ENCODE measurements at regions of chr15 and their contacts with region 1.

Region 1: DNA sequence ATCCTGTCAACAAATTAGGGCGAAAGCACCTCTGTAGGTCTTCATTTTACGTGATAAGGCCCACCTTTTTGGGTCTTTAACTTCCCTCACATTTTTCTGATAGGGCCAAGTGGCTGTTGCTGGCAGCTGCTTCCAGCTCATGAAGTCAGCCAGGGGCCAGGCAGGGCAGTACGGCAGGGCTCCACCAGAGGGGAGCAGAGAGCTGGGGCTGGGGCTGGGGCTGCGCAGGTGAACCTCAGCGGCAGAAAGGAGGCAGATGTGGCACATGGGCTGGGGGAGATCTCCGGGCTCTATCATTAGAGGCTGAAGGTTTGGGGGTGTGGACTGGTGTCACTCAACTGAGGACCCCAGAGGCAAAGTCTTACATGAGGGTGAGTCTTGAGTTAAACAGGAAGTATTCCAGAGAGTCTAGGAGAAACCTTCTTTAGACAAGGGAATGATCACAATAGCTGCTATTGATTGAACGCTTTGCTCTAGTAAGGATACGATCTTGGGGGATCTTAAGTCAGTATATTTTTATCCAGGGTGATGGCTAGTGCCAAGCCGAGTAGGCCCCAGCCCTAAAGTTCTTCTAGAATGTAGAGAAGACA is 62.8 kb upstream of the MEX3B start:
- DNase-seq: peak; percentile 60
- H3K4me3 ChIP-seq: no peak overlapping the region
- H3K27ac ChIP-seq: no peak overlapping the region
- H3K4me1 ChIP-seq: no peaks in the 10 kb centered on the region
- H3K27me3 ChIP-seq: no peaks in the 10 kb centered on the region
- CTCF ChIP-seq: peak; percentile 71 to 87
- POLR2A ChIP-seq: no peak

Region 2: DNA sequence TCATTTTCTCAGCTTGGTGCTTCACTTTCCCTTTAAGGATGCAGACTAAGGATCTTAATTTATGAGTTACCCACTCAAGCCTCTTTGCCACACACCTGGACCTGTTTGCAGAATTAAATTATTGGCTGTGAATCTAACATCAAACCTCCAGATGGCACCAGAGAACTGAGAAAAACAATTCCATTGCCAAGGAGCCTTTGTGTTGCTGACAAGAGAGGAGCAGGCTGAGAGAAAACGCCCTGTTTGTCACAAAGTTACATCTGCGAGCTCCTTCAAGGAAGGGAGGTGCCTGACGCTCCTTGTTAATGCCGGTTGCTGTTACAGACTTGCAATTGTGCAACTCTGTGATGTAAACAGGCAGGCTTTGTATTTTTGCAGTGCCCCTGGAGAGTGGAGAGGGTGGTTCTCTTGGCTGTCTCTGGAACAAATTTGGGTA is 698.2 kb before region 1 on chr15:
- CTCF ChIA-PET with region 1: interaction called, 26 read pairs
- POLR2A ChIA-PET with region 1: no interaction called
- dilution Hi-C with region 1: no loop called
- intact Hi-C with region 1: loop called (anchors 2 kb)
- DNase-seq: peak; percentile 74
- H3K4me3 ChIP-seq: no peak overlapping the region
- H3K27ac ChIP-seq: no peak overlapping the region
- H3K4me1 ChIP-seq: no peaks in the 10 kb centered on the region
- H3K27me3 ChIP-seq: peaks cover 0 to 2% of the 10 kb centered on the region in 2 experiments
- CTCF ChIP-seq: peak; percentile 28 to 32
- POLR2A ChIP-seq: no peak

Region 3: DNA sequence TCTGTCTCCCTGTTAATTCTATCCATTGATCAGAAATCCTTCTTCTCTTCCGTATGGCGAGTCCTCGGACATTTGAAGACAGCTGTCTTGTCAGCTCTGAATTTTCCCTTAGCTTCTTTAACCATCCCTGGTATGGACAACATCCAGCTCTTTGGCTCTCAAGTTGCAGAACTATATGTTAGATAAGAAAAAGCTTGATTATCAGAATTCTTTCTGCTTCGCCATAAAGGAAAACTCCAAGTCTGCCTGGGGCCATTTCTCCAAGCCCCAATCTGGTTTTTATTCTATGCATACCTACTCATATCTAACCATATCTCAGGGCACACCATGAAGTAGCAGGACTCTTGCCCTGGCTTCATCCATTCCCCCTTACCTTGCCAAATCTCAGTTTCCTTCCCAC is 518.9 kb before region 1 on chr15:
- CTCF ChIA-PET with region 1: no interaction called
- POLR2A ChIA-PET with region 1: no interaction called
- dilution Hi-C with region 1: no loop called
- intact Hi-C with region 1: no loop called
- DNase-seq: no peak
- H3K4me3 ChIP-seq: no peak overlapping the region
- H3K27ac ChIP-seq: no peak overlapping the region
- H3K4me1 ChIP-seq: no peaks in the 10 kb centered on the region
- H3K27me3 ChIP-seq: no peaks in the 10 kb centered on the region
- CTCF ChIP-seq: no peak
- POLR2A ChIP-seq: no peak

Region 4: DNA sequence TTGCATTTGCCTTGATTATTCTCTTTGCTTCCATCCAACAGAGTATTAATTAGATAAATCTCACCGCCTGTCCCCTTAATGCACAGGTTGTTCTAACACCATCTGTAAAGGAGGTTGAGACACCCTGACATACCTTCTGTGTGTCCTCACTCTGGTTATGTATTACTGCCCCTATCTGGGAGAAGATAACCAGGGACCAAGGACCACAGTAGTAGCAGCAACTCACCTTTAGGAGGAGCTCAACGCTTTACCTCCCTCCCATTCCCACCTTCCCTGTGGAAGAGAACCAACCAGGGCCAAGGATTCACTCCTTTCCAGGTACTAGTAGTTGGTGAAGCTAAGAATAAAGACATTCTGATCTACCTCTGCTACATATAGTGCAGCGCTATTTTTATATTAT is 295.4 kb before region 1 on chr15:
- CTCF ChIA-PET with region 1: no interaction called
- POLR2A ChIA-PET with region 1: no interaction called
- dilution Hi-C with region 1: no loop called
- intact Hi-C with region 1: no loop called
- DNase-seq: no peak
- H3K4me3 ChIP-seq: no peak overlapping the region
- H3K27ac ChIP-seq: no peak overlapping the region
- H3K4me1 ChIP-seq: no peaks in the 10 kb centered on the region
- H3K27me3 ChIP-seq: no peaks in the 10 kb centered on the region
- CTCF ChIP-seq: no peak
- POLR2A ChIP-seq: no peak

Region 5: DNA sequence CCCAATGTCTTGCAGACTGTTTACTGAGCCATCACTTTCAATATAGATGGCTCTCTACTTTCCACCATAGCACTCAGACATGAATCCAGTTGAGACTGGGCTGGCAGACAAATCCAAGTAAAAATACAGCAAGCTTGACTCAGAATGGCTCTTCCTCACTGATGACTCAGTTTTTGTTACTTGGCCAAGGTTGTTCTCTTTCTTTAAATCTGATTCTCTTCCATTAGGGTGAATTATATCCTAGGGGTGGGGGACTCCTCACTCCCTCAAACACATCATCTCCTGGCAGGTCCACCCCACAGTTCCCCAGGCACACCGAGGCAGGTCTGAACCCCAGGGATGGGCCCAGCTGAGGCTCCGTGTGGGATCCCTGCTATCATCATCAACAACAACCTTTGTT is 220.7 kb before region 1 on chr15:
- CTCF ChIA-PET with region 1: no interaction called
- POLR2A ChIA-PET with region 1: no interaction called
- dilution Hi-C with region 1: no loop called
- intact Hi-C with region 1: no loop called
- DNase-seq: no peak
- H3K4me3 ChIP-seq: no peak overlapping the region
- H3K27ac ChIP-seq: no peak overlapping the region
- H3K4me1 ChIP-seq: no peaks in the 10 kb centered on the region
- H3K27me3 ChIP-seq: no peaks in the 10 kb centered on the region
- CTCF ChIP-seq: no peak
- POLR2A ChIP-seq: no peak

Region 6: GRCh38 chr15:82093774-82094211 is 14.8 kb before region 1 on chr15:
- CTCF ChIA-PET with region 1: interaction called, 13 read pairs
- POLR2A ChIA-PET with region 1: no interaction called
- dilution Hi-C with region 1: no loop called
- intact Hi-C with region 1: no loop called
- DNase-seq: peak; percentile 74
- H3K4me3 ChIP-seq: peak overlapping the region in 1 of 3 experiments; percentile 16
- H3K27ac ChIP-seq: peak overlapping the region; percentile 47
- H3K4me1 ChIP-seq: peaks cover 9% of the 10 kb centered on the region
- H3K27me3 ChIP-seq: no peaks in the 10 kb centered on the region
- CTCF ChIP-seq: no peak
- POLR2A ChIP-seq: no peak

Region 7: DNA sequence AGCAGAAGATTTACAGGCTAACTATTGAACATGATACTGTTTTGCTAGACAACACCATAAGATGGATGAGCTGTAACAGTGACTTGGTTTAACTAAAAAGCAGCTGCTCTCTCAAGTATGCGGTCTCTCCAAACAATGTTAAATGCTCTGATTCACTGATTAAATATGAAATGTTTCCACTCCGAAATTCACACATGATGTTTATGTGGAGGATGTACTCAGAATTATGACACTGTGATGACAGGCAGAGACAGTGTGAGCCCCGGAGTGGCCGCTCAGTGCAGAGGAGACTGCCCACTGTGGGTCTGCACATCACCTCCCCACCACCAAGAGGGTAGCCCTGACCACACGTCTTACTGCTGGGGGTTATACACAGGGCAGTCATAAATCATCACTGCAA is 21.2 kb after region 1 on chr15:
- CTCF ChIA-PET with region 1: interaction called, 29 read pairs
- POLR2A ChIA-PET with region 1: no interaction called
- dilution Hi-C with region 1: no loop called
- intact Hi-C with region 1: no loop called
- DNase-seq: no peak
- H3K4me3 ChIP-seq: no peak overlapping the region
- H3K27ac ChIP-seq: no peak overlapping the region
- H3K4me1 ChIP-seq: no peaks in the 10 kb centered on the region
- H3K27me3 ChIP-seq: no peaks in the 10 kb centered on the region
- CTCF ChIP-seq: no peak
- POLR2A ChIP-seq: no peak

Region 8: DNA sequence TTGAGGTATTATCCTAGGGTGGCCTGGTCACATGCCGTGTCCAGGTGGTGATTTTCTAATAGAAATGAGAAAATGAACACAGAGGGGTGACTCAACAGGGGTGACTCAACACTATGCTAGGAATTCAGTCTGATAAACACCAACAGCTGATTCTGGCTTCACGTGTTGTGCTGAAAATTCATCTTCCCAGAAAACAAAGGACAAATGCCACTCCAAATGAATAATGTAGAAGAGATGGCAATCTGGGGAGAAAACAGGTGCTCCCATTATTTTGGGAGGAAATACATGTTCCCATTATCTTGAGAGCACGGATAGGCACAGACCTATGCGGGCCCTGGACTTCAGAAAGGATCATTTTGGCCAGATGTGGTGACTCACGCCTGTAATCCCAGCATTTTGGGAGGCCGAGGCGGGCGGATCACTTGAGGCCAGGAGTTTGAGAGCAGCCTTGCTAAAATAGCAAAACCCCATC is 38.4 kb after region 1 on chr15:
- CTCF ChIA-PET with region 1: interaction called, 63 read pairs
- POLR2A ChIA-PET with region 1: no interaction called
- dilution Hi-C with region 1: no loop called
- intact Hi-C with region 1: no loop called
- DNase-seq: peak; percentile 93
- H3K4me3 ChIP-seq: no peak overlapping the region
- H3K27ac ChIP-seq: peak overlapping the region; percentile 83
- H3K4me1 ChIP-seq: peaks cover 15% of the 10 kb centered on the region
- H3K27me3 ChIP-seq: no peaks in the 10 kb centered on the region
- CTCF ChIP-seq: no peak
- POLR2A ChIP-seq: no peak

Region 9: DNA sequence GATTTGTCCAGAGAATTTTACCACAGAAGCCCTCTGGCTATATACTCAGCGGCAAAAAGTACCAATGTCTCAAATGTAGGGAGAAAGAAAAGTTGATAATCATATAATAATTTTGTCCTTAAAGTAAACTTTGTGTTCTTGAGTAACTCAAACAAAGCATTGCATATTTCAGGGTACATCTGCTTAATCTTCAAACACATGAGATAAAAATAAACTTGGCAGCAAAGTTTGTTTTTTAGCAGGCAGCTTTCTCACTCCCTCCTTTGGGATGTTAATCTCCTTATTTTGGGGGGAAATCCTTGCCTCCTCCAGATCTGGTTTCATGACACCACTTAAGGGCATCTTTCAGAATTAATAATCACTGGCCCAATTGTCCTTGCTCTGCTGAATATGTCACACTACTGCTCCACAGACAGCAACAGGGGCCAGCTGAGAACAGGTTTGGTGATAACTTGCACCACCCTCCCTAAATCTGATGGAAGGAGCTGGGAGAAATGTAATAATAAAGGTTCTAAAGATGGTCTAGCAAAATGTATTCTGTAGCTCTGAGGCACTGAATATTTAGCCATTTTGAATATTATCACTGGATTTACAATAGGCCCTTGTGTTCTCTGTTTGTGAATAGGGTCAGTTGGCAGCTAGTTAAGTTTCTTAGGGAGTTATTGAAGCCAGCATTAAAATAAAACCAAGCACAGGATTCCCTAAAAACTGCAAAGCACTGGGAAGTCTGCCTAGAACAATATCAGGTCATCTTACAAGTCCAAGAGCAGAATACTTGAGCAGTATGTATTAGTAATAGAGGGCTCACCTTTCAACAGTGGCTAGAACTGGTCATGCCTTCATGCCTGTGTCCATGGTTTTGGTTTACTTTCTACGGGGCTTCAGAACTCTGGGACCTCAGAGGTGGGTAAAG is 74.8 kb after region 1 on chr15:
- CTCF ChIA-PET with region 1: interaction called, 13 read pairs
- POLR2A ChIA-PET with region 1: no interaction called
- dilution Hi-C with region 1: no loop called
- intact Hi-C with region 1: no loop called
- DNase-seq: no peak
- H3K4me3 ChIP-seq: no peak overlapping the region
- H3K27ac ChIP-seq: no peak overlapping the region
- H3K4me1 ChIP-seq: no peaks in the 10 kb centered on the region
- H3K27me3 ChIP-seq: no peaks in the 10 kb centered on the region
- CTCF ChIP-seq: no peak
- POLR2A ChIP-seq: no peak